ENCODE measurements at regions of chr6 and their contacts with region 1.

Region 1: DNA sequence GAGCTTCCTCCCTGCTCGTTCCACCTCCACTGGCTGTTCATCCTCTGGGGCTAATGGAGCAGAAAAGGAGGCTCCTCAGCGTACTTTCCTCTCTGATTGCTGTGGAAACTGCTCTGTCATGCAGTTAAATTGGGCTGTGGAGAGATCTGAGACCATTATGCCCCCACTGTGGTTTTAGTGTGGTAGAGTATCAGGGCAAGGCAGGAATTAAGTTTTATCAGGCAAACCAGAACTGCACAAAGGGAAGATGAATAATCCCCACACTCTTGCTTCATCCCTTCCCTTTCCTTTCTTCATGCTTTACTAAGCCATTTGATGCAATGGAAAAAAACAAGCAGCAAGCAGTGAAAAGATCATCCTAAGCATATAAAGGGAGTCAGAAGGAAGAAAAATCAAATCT is 11.9 kb upstream of the ME1 start:
- DNase-seq: no peak

Region 2: DNA sequence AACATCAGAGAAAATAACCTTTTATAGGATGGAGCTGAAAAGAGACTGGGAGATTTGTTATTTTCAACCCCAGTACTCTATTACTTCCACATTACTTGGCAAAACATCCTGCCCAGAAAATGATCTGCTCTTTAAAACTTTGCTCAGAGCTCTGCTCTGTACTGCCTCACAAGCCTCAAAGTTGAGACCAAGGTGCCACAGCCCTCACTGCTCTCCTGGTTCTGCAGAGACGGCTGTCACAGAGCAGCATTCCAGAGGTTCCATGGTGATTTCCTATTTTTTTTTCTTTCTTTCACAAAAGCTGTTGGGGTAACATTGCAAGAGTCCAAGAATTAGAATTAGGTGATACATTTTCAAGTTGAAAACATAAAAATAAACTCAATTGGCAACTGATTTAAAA is 532.4 kb before region 1 on chr6:
- intact Hi-C with region 1: loop called in 1 of 2 experiments (anchors 5 kb)
- DNase-seq: no peak

Region 3: GRCh38 chr6:83459663-83460062 is 16.9 kb after region 1 on chr6:
- intact Hi-C with region 1: no loop called
- DNase-seq: no peak

Measured in posterior vena cava (tissue), 2 donors.